CD4-positive, alpha-beta memory T cell (primary cell): ENCODE measurements at regions of chr20 and their contacts with region 1.

Region 1: DNA sequence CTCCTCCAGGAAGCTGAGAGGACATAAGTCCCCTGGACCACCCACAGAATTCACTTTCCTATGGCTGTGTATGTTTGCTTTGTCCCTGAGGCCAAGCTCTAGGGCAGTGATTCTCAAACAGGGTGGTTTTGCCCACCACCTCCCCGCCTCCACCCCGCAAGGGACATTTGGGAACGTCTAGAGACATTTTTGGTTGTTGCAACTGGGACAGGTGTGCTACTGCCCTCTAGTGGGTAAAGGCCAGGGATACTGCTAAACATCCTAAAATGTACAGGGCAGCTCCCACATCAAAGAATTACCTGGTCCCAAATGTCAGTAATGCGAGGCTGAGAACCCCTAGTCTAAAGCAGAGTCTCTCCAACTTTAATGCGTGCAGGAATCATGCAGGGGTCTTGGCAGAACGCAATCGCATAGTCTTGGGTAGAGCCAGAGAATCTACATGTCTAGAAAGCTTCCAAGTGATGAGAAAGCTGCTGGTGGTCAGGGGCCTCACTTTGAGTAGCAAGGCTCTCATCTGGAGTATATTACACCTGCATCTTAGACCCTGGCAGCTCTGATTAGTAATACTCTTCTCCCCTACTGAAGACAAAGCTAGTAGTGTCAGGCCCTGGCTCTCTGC is 5.1 kb downstream of the KCNS1 start:
- DNase-seq: peak; percentile 52 to 64 (median 61)
- H3K4me3 ChIP-seq: no peak overlapping the region
- H3K4me3 Mint-ChIP-seq: peak overlapping the region in 1 of 8 donors; percentile 51
- H3K27ac ChIP-seq: no peak overlapping the region
- H3K27ac Mint-ChIP-seq: peak overlapping the region in 2 of 7 donors; percentile 25 to 57
- H3K4me1 ChIP-seq: peaks cover 11% of the 10 kb centered on the region
- H3K4me1 Mint-ChIP-seq: peaks cover 3 to 19% (median 13%) of the 10 kb centered on the region in 4 donors
- H3K27me3 ChIP-seq: peaks cover 27% of the 10 kb centered on the region
- H3K27me3 Mint-ChIP-seq: peaks cover 26 to 35% of the 10 kb centered on the region in 2 donors

Region 2: GRCh38 chr20:44909872-44910689 is 185.8 kb before region 1 on chr20 and contains the start of gene PABPC1L:
- CTCF ChIA-PET with region 1: interaction called, 19 read pairs
- POLR2A ChIA-PET with region 1: interaction called, 4 read pairs
- intact Hi-C with region 1: loop called (anchors 1 kb)
- DNase-seq: peak; percentile 68 to 83 (median 71)
- H3K4me3 ChIP-seq: peak within 1 kb of the TSS; percentile 42 to 61
- H3K4me3 Mint-ChIP-seq: peak within 1 kb of the TSS; percentile 82 to 92 (median 86)
- H3K27ac ChIP-seq: peak within 1 kb of the TSS; percentile 40
- H3K27ac Mint-ChIP-seq: peak within 1 kb of the TSS; percentile 29 to 86 (median 74)
- H3K4me1 ChIP-seq: peaks cover 19% of the 10 kb centered on the region
- H3K4me1 Mint-ChIP-seq: peaks cover 14 to 45% (median 30%) of the 10 kb centered on the region in 4 donors
- H3K27me3 ChIP-seq: no peaks in the 10 kb centered on the region
- H3K27me3 Mint-ChIP-seq: no peaks in the 10 kb centered on the region
- total RNA-seq, gene PABPC1L: 46.5 to 50.0 TPM

Region 3: DNA sequence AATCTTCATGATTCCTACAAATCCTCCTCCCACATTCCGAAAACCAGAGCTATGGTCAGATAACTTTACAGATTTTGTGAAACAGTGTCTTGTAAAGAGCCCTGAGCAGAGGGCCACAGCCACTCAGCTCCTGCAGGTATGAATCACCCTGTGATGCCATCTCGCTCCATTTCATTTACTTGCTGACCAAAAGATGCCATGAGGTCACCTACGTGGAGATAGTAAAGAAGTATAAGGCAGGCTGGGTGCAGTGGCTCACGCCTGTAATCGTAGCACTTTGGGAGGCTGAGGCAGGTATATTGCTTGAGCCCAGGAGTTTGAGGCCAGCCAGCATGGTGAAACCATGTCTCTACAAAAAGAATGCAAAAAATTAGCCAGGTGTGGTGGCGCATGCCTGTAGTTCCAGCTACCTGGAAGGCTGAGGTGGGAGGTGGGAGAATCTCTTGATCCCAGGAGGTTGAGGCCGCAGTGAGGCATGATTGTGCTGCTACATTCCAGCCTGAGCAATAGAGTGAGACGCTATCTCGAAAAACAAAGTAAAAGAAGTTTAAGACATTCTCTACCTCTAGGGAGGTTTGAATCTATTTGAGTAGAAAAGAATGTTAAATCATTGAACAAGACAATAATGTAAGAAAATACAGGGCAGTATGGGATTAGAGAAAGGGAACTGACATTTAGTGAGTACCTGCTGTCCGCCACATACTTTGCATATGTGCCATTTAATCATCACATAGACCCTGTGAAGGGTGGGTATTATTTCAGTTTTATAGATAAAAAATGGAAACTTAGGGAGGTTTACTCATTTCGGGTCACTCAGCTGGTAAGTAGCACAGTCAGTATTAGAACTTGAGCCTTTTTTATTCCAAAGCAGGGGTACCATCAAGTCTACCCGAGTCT is 98.4 kb before region 1 on chr20:
- CTCF ChIA-PET with region 1: interaction called, 12 read pairs
- POLR2A ChIA-PET with region 1: no interaction called
- intact Hi-C with region 1: no loop called
- DNase-seq: no peak
- H3K4me3 ChIP-seq: no peak overlapping the region
- H3K4me3 Mint-ChIP-seq: peak overlapping the region in 2 of 8 donors; percentile 17 to 39
- H3K27ac ChIP-seq: no peak overlapping the region
- H3K27ac Mint-ChIP-seq: peak overlapping the region; percentile 11 to 90 (median 61)
- H3K4me1 ChIP-seq: peaks cover 60% of the 10 kb centered on the region
- H3K4me1 Mint-ChIP-seq: peaks cover 42 to 82% (median 62%) of the 10 kb centered on the region in 4 donors
- H3K27me3 ChIP-seq: no peaks in the 10 kb centered on the region
- H3K27me3 Mint-ChIP-seq: no peaks in the 10 kb centered on the region

Region 4: DNA sequence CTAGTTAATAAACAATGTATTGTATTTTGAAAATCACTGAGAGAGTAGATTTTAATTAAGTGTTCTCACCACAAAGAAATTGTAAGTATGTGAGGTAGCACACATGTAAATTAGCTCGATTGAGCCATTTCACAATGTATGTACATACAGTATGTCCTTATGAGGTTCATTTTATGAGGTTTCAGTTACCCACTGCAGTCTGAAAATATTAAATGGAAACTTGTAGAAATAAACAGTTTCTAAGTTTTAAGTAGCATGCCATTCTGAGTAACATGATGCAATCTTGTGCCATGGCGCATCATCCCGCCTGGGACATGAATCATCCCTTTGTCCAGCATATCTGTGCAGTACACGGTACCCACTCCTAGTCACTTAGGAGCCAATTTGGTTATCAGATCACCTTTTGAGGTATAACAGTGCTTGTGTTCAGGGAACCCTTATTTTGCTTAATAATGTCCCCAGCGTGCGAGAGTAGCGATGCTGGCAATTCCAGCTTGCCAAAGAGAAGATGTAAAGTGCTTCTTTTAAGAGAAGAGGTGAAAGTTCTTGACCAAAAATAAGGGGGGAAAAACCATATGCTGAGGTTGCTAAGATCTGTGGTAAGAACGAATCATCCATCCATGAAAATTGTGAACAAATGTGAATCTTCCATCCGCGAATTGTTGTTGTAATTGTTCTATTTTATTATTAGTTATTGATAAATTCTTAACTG is 59.7 kb before region 1 on chr20:
- CTCF ChIA-PET with region 1: interaction called, 69 read pairs
- POLR2A ChIA-PET with region 1: no interaction called
- intact Hi-C with region 1: no loop called
- DNase-seq: peak in 1 of 5 donors; percentile 41
- H3K4me3 ChIP-seq: no peak overlapping the region
- H3K4me3 Mint-ChIP-seq: peak overlapping the region in 3 of 8 donors; percentile 2 to 47 (median 29)
- H3K27ac ChIP-seq: no peak overlapping the region
- H3K27ac Mint-ChIP-seq: peak overlapping the region; percentile 7 to 85 (median 69)
- H3K4me1 ChIP-seq: peaks cover 93% of the 10 kb centered on the region
- H3K4me1 Mint-ChIP-seq: peaks cover 61 to 89% (median 75%) of the 10 kb centered on the region in 4 donors
- H3K27me3 ChIP-seq: no peaks in the 10 kb centered on the region
- H3K27me3 Mint-ChIP-seq: no peaks in the 10 kb centered on the region

Region 5: GRCh38 chr20:45070932-45071632 is 24.8 kb before region 1 on chr20:
- CTCF ChIA-PET with region 1: interaction called, 22 read pairs
- POLR2A ChIA-PET with region 1: no interaction called
- intact Hi-C with region 1: no loop called
- DNase-seq: no peak
- H3K4me3 ChIP-seq: no peak overlapping the region
- H3K4me3 Mint-ChIP-seq: no peak overlapping the region
- H3K27ac ChIP-seq: no peak overlapping the region
- H3K27ac Mint-ChIP-seq: peak overlapping the region in 6 of 7 donors; percentile 32 to 75 (median 58)
- H3K4me1 ChIP-seq: peaks cover 35% of the 10 kb centered on the region
- H3K4me1 Mint-ChIP-seq: peaks cover 37 to 73% (median 54%) of the 10 kb centered on the region in 4 donors
- H3K27me3 ChIP-seq: no peaks in the 10 kb centered on the region
- H3K27me3 Mint-ChIP-seq: no peaks in the 10 kb centered on the region

Region 6: DNA sequence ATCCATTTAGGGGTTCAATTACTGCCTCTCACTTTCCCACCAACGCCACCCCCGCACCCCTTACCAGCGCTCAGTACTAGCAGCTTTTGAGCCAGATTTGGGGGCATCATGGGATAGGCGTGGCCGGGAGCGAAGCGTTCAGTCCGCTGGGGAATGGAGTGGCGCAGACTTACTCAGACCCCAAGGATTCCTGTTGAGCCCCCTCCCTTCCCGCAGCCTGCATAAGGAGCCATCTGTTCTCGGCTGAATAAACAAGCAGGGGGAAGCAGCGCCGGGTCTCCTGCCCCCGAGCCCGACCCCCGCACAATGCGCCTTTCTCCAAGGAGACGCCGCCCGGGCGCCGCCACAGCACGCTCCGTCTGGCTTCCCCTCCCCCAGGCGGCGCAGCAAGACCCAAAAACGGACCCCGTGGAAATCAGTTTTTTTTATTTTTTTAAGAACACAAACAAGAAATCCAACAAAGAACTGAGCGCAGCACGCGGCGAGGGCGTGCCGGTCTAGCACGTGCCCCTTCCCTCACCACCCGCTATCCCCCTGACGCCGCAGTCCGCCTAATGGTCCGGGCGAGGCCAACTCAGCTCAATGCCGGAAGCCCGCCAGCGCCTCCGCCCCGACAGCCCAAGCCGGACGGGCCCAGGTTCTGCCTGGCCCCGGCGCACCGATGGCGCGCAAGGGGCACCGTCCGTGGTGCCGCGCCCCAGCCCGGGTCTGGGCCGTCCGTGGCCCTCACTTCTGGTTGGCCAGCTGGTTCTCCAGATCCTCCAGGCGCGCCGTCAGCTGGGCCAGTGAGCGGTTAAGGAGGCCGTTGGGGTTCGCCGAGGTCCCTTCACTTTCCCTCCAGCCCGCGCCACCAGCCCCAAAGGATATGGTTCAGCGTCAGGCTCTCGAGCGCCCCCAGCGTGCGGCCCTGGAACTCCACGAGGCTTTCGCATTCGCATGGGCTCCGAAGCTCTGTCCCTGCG is 197.5 kb after region 1 on chr20:
- CTCF ChIA-PET with region 1: interaction called, 6 read pairs
- POLR2A ChIA-PET with region 1: no interaction called
- intact Hi-C with region 1: loop called (anchors 2 kb)
- DNase-seq: peak; percentile 70 to 77 (median 71)
- H3K4me3 ChIP-seq: peak overlapping the region; percentile 40 to 64
- H3K4me3 Mint-ChIP-seq: peak overlapping the region; percentile 68 to 84 (median 79)
- H3K27ac ChIP-seq: no peak overlapping the region
- H3K27ac Mint-ChIP-seq: no peak overlapping the region
- H3K4me1 ChIP-seq: peaks cover 11% of the 10 kb centered on the region
- H3K4me1 Mint-ChIP-seq: peaks cover 2 to 8% (median 4%) of the 10 kb centered on the region in 4 donors
- H3K27me3 ChIP-seq: no peaks in the 10 kb centered on the region
- H3K27me3 Mint-ChIP-seq: peaks cover 9 to 30% of the 10 kb centered on the region in 2 donors